SK-N-SH (cell line): ENCODE measurements at regions of chr11 and their contacts with region 1.

Region 1: DNA sequence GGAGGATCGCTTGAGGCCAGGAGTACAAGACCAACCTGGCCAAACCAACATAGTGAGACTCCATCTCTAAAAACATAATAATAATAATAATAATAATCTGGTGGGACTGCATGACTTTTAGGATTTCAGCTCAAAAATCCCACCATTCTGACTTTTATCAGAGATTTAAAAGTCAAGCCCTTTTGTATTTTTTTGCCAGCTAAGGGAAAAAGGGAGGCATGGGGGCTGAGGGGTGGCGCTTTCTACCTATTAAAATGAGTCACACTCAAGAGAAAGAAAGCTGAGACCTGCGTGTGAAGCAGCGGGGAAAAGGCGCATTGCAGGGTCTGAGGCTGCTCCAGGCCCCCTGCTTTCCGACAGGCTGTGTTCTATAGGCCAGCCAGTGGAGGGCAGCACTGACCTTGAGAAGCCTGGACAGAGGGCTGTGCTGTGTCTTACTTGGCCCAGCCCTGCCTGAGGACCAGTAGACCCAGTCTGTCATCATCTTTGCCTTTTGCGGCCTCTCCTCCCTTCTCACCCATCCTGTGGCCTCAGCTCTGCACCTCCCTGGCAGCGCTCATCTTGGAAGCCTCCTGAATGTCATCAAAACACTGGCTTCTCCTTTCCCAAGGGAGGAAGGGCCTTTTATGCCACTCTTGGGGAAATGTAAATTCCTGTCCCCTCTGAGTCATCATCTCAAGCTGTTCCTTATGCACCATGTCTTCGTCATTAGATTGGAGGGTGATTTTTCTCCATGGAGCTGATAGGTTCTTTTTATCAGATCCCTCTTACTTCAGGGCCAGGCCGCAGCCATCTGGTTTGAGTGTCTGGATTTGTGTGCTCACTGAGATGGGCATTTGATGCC is 12.7 kb upstream of the MAPK8IP1 start:
- DNase-seq: peak; percentile 88
- H3K4me3 ChIP-seq: peak overlapping the region in 1 of 2 experiments; percentile 41; a peak in 1 of 4 replicates
- H3K27ac ChIP-seq: peak overlapping the region; percentile 70 to 83
- H3K4me1 ChIP-seq: peaks cover 9 to 17% of the 10 kb centered on the region in 2 experiments; a peak in 3 of 4 replicates
- H3K27me3 ChIP-seq: no peaks in the 10 kb centered on the region
- CTCF ChIP-seq: peak; percentile 90
- EP300 ChIP-seq: peak in 1 of 2 experiments; percentile 61; a peak in 1 of 4 replicates
- RAD21 ChIP-seq: peak; percentile 93

Region 2: GRCh38 chr11:45852708-45853101 is 20.0 kb before region 1 on chr11:
- CTCF ChIA-PET with region 1: interaction called, 118 read pairs
- POLR2A ChIA-PET with region 1: no interaction called
- DNase-seq: no peak
- H3K4me3 ChIP-seq: no peak overlapping the region
- H3K27ac ChIP-seq: no peak overlapping the region
- H3K4me1 ChIP-seq: peaks cover 22 to 38% of the 10 kb centered on the region in 2 experiments
- H3K27me3 ChIP-seq: no peaks in the 10 kb centered on the region
- CTCF ChIP-seq: no peak
- EP300 ChIP-seq: no peak
- RAD21 ChIP-seq: peak; percentile 8; the same call in 1 of the 2 replicates

Region 3: GRCh38 chr11:45885274-45885920 is 12.7 kb after region 1 on chr11 and contains the start of gene MAPK8IP1:
- CTCF ChIA-PET with region 1: interaction called, 25 read pairs
- POLR2A ChIA-PET with region 1: no interaction called
- DNase-seq: peak; percentile 97
- H3K4me3 ChIP-seq: peak within 1 kb of the TSS; percentile 66 to 67
- H3K27ac ChIP-seq: peak within 1 kb of the TSS in 1 of 2 experiments; percentile 63; a peak in 2 of 4 replicates
- H3K4me1 ChIP-seq: peaks cover 10 to 55% of the 10 kb centered on the region in 2 experiments
- H3K27me3 ChIP-seq: no peaks in the 10 kb centered on the region
- CTCF ChIP-seq: no peak
- EP300 ChIP-seq: no peak
- RAD21 ChIP-seq: no peak
- polyA plus RNA-seq, gene MAPK8IP1: 11.0 and 12.5 TPM in 2 replicates

Region 4: GRCh38 chr11:45899448-45900173 is 26.9 kb after region 1 on chr11:
- CTCF ChIA-PET with region 1: interaction called, 31 read pairs
- POLR2A ChIA-PET with region 1: no interaction called
- DNase-seq: peak; percentile 97
- H3K4me3 ChIP-seq: peak overlapping the region; percentile 52 to 93
- H3K27ac ChIP-seq: peak overlapping the region; percentile 76 to 89
- H3K4me1 ChIP-seq: peaks cover 11 to 45% of the 10 kb centered on the region in 2 experiments; a peak in 2 of 4 replicates
- H3K27me3 ChIP-seq: no peaks in the 10 kb centered on the region
- CTCF ChIP-seq: no peak
- EP300 ChIP-seq: peak in 1 of 2 experiments; percentile 45; a peak in 1 of 4 replicates
- RAD21 ChIP-seq: no peak

Region 5: GRCh38 chr11:45930031-45930794 is 57.5 kb after region 1 on chr11:
- CTCF ChIA-PET with region 1: interaction called, 25 read pairs
- POLR2A ChIA-PET with region 1: no interaction called
- DNase-seq: peak; percentile 39
- H3K4me3 ChIP-seq: no peak overlapping the region
- H3K27ac ChIP-seq: no peak overlapping the region; a peak in 1 of 4 replicates
- H3K4me1 ChIP-seq: peaks cover 0 to 5% of the 10 kb centered on the region in 2 experiments; a peak in 1 of 4 replicates
- H3K27me3 ChIP-seq: no peaks in the 10 kb centered on the region
- CTCF ChIP-seq: no peak
- EP300 ChIP-seq: no peak
- RAD21 ChIP-seq: no peak

Region 6: DNA sequence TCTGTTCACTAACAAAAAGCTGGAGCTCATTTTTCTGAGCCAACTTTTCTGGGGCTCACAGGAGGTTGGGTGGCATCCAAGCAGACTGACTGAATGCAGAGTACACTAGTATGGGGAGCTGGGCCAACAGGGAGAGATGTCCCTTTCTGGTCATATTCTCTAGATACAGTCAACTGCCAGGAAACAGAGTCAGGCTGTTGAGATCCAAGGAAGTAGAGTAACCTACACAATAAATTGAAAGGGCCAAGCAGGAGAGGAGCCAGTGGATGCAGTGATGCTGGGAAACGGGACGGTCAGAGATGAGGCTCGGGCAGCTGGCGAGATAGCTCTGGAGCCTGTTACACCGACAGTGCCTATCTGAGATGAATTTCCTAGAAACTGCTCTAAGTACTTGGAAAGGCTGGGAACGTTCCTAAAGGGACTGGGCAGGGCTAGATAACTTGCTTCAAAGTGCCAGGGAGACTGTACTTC is 120.8 kb after region 1 on chr11:
- CTCF ChIA-PET with region 1: interaction called, 19 read pairs
- POLR2A ChIA-PET with region 1: no interaction called
- DNase-seq: no peak
- H3K4me3 ChIP-seq: no peak overlapping the region
- H3K27ac ChIP-seq: peak overlapping the region; percentile 36 to 46; a peak in 3 of 4 replicates
- H3K4me1 ChIP-seq: peaks cover 16 to 24% of the 10 kb centered on the region in 2 experiments; a peak in 3 of 4 replicates
- H3K27me3 ChIP-seq: no peaks in the 10 kb centered on the region
- CTCF ChIP-seq: no peak
- EP300 ChIP-seq: no peak
- RAD21 ChIP-seq: no peak